ENCODE measurements at regions of chr12 and their contacts with region 1.

Region 1: GRCh38 chr12:27999521-27999920 is 27.0 kb upstream of the PTHLH start:
- DNase-seq: peak; percentile 97
- H3K4me3 ChIP-seq: no peak overlapping the region
- H3K27ac ChIP-seq: peak overlapping the region; percentile 92
- H3K4me1 ChIP-seq: peaks cover 24% of the 10 kb centered on the region
- H3K27me3 ChIP-seq: no peaks in the 10 kb centered on the region
- CTCF ChIP-seq: no peak

Region 2: DNA sequence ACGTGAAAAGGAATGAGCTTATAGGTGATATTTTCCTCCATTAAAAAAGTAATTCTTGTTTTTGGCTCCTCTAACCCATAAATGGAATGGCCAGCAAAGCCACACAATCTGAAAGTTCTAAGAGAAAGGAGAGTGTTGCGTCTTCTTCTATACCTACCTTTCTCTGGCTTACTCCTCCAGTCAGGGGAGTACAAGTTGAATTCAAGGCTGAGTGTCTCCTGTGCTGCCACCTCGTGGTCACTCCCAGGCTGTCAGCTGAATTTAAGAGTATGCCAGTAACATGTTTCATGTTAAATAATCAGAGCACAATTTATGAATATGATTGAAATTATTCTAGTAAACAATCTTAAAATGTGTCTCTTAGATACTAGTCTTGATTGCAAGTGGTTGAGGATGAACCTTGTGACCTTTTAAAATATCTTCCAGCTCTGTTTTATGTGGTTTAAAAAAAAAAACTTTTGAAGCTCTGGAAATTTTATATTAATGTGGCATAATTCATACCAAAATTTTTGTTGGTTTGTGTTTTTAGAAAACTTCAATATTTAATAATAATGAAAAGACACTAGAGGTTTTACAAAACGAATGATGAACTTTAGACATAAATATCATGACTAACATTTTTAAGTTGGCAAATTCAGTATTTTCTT is 58.6 kb before region 1 on chr12:
- CTCF ChIA-PET with region 1: no interaction called
- dilution Hi-C with region 1: no loop called
- in situ Hi-C with region 1: no loop called
- intact Hi-C with region 1: no loop called
- DNase-seq: peak; percentile 68
- H3K4me3 ChIP-seq: no peak overlapping the region
- H3K27ac ChIP-seq: no peak overlapping the region
- H3K4me1 ChIP-seq: no peaks in the 10 kb centered on the region
- H3K27me3 ChIP-seq: no peaks in the 10 kb centered on the region
- CTCF ChIP-seq: peak; percentile 84 to 92

Region 3: DNA sequence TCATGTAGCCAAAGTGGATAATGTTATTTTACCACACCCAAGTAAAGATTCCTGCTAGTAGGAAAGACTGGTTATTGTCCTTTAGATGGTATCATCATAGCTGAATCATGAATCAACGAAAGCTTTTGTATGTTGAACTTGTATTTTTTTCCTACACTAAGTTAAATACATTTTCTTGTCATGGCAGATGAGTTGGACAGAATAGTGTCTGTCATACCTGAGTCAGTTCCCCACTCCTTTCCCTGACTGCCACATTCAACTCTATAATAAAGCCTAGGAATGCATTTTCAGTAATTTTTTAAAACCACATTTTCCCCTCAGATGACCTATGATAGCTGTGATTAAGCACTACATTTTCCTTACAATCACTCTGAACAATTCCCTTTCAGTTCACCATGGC is 17.6 kb before region 1 on chr12:
- CTCF ChIA-PET with region 1: no interaction called
- dilution Hi-C with region 1: no loop called
- in situ Hi-C with region 1: no loop called
- intact Hi-C with region 1: loop called (anchors 1 kb)
- DNase-seq: peak; percentile 98
- H3K4me3 ChIP-seq: no peak overlapping the region
- H3K27ac ChIP-seq: peak overlapping the region; percentile 98
- H3K4me1 ChIP-seq: peaks cover 28% of the 10 kb centered on the region
- H3K27me3 ChIP-seq: no peaks in the 10 kb centered on the region
- CTCF ChIP-seq: no peak

Region 4: DNA sequence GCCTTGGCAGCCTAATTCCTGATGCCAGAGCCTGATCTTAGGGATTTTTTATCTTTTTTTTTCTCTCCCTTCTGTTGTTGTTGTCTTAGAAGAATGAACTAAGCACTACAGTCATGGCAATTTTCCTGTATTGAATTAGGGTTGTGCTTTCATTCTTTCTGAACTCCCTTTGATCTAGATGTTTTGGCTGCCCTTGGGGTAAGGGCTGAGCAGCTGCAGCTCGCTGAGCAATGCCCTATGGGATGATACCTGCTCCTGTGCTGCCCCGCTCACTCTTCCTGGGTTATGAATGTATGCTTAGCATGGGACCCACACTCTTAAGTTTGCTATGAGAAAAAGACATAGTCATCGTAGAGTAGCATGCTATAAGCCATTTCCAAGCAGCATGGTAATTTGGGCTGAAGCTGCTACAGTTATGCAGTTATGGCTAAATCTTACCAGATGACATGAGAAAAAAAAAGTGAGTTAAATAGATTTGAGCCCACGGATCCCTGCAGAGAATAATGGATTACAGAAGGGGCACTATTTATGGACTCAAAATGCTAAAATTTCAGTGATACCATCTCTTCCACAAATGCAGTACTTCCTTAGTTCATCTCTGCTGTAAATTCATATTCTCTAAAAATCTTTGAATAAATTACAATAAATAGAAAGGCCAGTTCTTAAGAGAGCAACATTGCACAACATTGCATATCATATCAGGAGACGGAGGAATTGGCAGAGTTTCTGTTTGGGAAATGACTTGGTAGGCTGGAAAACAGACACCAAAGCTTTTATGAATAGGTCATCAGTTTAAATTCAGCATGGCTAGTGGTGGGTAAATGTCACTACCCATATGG is 52.2 kb after region 1 on chr12:
- CTCF ChIA-PET with region 1: no interaction called
- dilution Hi-C with region 1: loop called (anchors 5 kb)
- in situ Hi-C with region 1: no loop called
- intact Hi-C with region 1: no loop called
- DNase-seq: no peak
- H3K4me3 ChIP-seq: no peak overlapping the region
- H3K27ac ChIP-seq: no peak overlapping the region
- H3K4me1 ChIP-seq: peaks cover 8% of the 10 kb centered on the region
- H3K27me3 ChIP-seq: no peaks in the 10 kb centered on the region
- CTCF ChIP-seq: no peak

Region 5: DNA sequence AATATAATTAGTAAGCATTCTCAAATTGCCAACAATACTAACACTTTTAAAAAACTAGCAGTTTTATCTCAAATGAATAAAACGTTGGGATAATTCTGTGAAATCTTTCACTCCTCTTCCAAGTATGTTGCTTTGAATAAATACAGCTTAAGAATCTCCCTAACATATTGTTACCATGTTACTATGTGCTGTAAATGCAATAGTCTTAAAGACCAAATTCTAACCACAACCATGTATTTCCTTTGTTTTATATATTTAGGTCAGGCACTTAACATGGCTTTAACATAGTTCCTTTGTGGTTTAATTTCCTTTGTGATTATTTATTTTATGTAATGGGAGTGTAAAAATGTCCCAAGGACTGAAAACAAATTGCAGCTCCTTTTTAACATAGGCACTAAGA is 156.8 kb after region 1 on chr12:
- CTCF ChIA-PET with region 1: interaction called, 11 read pairs
- dilution Hi-C with region 1: no loop called
- in situ Hi-C with region 1: no loop called
- intact Hi-C with region 1: no loop called
- DNase-seq: no peak
- H3K4me3 ChIP-seq: no peak overlapping the region
- H3K27ac ChIP-seq: no peak overlapping the region
- H3K4me1 ChIP-seq: no peaks in the 10 kb centered on the region
- H3K27me3 ChIP-seq: no peaks in the 10 kb centered on the region
- CTCF ChIP-seq: no peak